AG04450 (cell line): ENCODE measurements at regions of chr5 and their contacts with region 1.

Region 1: GRCh38 chr5:141430332-141431113 is at the start of gene PCDHGA12:
- DNase-seq: no peak
- H3K4me3 ChIP-seq: peak within 1 kb of the TSS; percentile 37
- H3K27ac ChIP-seq: peak within 1 kb of the TSS; percentile 52
- H3K27me3 ChIP-seq: no peaks in the 10 kb centered on the region
- CTCF ChIP-seq: peak; percentile 43; the same call in 1 of the 2 replicates
- polyA plus RNA-seq, gene PCDHGA12: 3.4 and 4.3 TPM in 2 replicates

Region 2: GRCh38 chr5:141298376-141298775 is 132.1 kb before region 1 on chr5:
- CTCF ChIA-PET with region 1: no interaction called
- POLR2A ChIA-PET with region 1: no interaction called
- DNase-seq: no peak
- H3K4me3 ChIP-seq: no peak overlapping the region
- H3K27ac ChIP-seq: no peak overlapping the region
- H3K27me3 ChIP-seq: no peaks in the 10 kb centered on the region
- CTCF ChIP-seq: no peak

Region 3: GRCh38 chr5:141412854-141413539 is 17.5 kb before region 1 on chr5 and contains the start of gene PCDHGA10:
- CTCF ChIA-PET with region 1: interaction called, 14 read pairs
- POLR2A ChIA-PET with region 1: no interaction called
- DNase-seq: no peak
- H3K4me3 ChIP-seq: peak within 1 kb of the TSS; percentile 58
- H3K27ac ChIP-seq: peak within 1 kb of the TSS; percentile 52
- H3K27me3 ChIP-seq: no peaks in the 10 kb centered on the region
- CTCF ChIP-seq: peak; percentile 77
- polyA plus RNA-seq, gene PCDHGA10: 9.2 and 11.7 TPM in 2 replicates